Natural killer cell (primary cell): ENCODE measurements at regions of chr12 and their contacts with region 1.

Region 1: DNA sequence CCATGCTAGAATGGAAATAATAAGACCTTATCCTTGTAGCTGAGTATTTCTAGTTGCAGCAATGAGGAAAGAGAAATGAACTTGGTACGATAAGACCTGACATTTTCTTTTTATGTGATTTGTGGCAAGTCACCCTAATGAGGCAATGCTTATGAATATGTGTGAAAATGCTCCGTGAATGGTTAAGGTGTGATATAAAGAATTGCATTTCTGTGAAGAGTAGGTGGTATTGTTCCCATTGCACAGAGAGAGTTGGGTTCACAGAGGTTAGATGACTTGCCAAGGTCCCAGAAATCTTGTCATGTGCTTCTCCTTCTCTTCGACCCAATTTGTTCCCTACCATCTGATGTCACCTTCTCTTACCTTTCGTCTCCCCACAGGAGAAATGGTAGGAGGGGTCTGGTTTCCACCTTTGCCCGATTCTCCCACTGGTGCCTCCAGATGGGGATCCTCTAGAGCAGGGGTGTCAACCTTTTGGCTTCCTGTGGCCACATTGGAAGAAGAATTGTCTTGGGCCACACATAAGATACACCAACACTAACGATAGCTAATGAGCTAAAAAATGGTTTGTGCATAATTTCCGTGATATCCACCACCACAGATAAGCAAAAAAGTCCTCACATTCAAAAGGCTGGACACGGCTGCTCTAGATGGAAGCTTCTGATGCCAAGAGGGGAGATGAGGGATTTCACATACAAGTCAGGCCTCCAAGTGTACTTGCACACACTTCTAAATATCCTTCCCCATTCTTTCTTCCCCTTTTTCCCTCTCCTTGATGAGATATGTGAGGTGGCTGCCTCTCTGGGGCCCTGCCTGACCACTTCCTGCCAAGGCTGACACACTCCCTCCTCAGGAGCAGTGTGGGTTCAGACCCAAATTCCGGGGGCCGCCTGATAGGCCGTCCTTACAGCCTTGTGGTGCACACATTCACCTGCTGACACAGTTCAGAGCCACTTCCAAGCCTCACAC is 96.1 kb downstream of the PLXNC1 start:
- DNase-seq: peak; percentile 52 to 61
- ATAC-seq: peak; percentile 73 to 89 (median 81)
- H3K4me3 ChIP-seq: no peak overlapping the region
- H3K4me3 Mint-ChIP-seq: peak overlapping the region; percentile 78
- H3K27ac ChIP-seq: peak overlapping the region; percentile 85
- H3K27ac Mint-ChIP-seq: peak overlapping the region; percentile 90
- H3K4me1 ChIP-seq: peaks cover 39% of the 10 kb centered on the region
- H3K4me1 Mint-ChIP-seq: peaks cover 55 to 61% of the 10 kb centered on the region in 2 donors
- H3K27me3 ChIP-seq: no peaks in the 10 kb centered on the region
- H3K27me3 Mint-ChIP-seq: no peaks in the 10 kb centered on the region
- CTCF ChIP-seq: no peak

Region 2: GRCh38 chr12:94180558-94181296 is 63.7 kb before region 1 on chr12:
- intact Hi-C with region 1: loop called (anchors 2 kb)
- DNase-seq: peak; percentile 54 to 56
- ATAC-seq: peak; percentile 78 to 86 (median 82)
- H3K4me3 ChIP-seq: no peak overlapping the region
- H3K4me3 Mint-ChIP-seq: peak overlapping the region; percentile 82
- H3K27ac ChIP-seq: peak overlapping the region; percentile 58
- H3K27ac Mint-ChIP-seq: peak overlapping the region; percentile 71 to 92
- H3K4me1 ChIP-seq: peaks cover 25% of the 10 kb centered on the region
- H3K4me1 Mint-ChIP-seq: peaks cover 27 to 46% of the 10 kb centered on the region in 2 donors
- H3K27me3 ChIP-seq: no peaks in the 10 kb centered on the region
- H3K27me3 Mint-ChIP-seq: no peaks in the 10 kb centered on the region
- CTCF ChIP-seq: no peak